Esophagus muscularis mucosa (tissue), 4 donors: ENCODE measurements at regions of chr19 and their contacts with region 1.

Region 1: GRCh38 chr19:13597640-13598039 is 91.4 kb upstream of the CACNA1A start:
- DNase-seq: no peak
- H3K4me3 ChIP-seq: no peak overlapping the region
- H3K27ac ChIP-seq: no peak overlapping the region
- H3K4me1 ChIP-seq: no peaks in the 10 kb centered on the region
- H3K27me3 ChIP-seq: peaks cover 0 to 47% (median 0%) of the 10 kb centered on the region in 4 donors
- CTCF ChIP-seq: peak; percentile 48 to 69 (median 64)
- EP300 ChIP-seq: no peak
- POLR2A ChIP-seq: no peak

Region 2: DNA sequence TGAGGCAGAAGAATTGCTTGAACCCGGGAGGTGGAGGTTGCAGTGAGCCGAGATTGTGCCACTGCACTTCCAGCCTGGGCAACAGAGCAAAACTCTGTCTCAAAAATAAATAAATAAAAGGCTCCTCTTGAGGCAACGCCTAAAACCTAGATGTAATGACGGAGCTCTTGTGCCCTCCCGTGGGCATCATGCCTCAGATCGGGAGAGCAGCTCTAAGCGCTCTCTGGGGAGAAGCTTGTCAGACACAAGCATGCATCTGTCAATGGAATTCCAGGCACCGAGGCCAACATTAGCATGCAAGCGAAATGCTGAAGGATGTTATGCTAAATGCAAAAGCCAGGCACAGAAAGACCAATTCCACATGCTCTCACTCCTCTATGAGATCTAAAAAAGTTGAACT is 121.1 kb after region 1 on chr19:
- intact Hi-C with region 1: loop called (anchors 2 kb)
- DNase-seq: no peak
- H3K4me3 ChIP-seq: no peak overlapping the region
- H3K27ac ChIP-seq: no peak overlapping the region
- H3K4me1 ChIP-seq: peaks cover 0 to 5% (median 0%) of the 10 kb centered on the region in 4 donors
- H3K27me3 ChIP-seq: no peaks in the 10 kb centered on the region
- CTCF ChIP-seq: peak; percentile 28 to 41 (median 35)
- EP300 ChIP-seq: no peak
- POLR2A ChIP-seq: no peak

Region 3: DNA sequence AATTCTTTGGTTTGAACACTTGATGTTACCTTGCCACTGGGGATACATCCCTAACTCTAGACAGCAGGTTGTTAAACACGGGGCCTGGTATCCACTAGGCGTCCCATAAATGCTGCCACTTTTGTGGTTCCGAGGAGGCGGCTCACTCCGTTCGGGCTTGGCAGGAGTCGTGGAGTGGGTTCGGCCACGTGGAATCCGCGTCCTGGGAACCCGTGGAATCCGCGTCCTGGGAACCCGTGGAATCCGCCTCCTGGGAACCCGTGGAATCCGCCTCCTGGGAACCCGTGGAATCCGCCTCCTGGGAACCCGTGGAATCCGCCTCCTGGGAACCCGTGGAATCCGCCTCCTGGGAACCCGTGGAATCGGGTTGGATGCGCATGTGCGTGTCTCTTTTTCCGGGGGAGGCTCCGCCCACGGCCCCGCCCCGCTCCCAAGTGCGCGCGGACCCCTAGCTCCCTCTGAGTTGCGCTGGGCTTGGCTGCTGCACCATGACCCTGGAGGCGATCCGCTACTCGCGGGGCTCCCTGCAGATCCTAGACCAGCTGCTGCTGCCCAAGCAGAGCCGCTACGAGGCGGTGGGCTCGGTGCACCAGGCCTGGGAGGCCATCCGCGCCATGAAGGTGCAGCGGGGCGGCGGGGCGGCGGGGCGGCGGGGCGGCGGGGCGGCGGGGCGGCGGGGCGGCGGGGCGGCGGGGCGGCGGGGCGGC is 166.6 kb after region 1 on chr19 and contains the start of gene MRI1:
- intact Hi-C with region 1: no loop called
- DNase-seq: peak; percentile 93
- H3K4me3 ChIP-seq: peak within 1 kb of the TSS; percentile 68 to 92 (median 82)
- H3K27ac ChIP-seq: peak within 1 kb of the TSS; percentile 75 to 83 (median 82)
- H3K4me1 ChIP-seq: peaks cover 4 to 33% (median 23%) of the 10 kb centered on the region in 4 donors
- H3K27me3 ChIP-seq: no peaks in the 10 kb centered on the region
- CTCF ChIP-seq: no peak
- EP300 ChIP-seq: no peak
- POLR2A ChIP-seq: no peak
- total RNA-seq, gene MRI1: 28.2 to 60.2 (median 38.5) TPM

Region 4: GRCh38 chr19:13861732-13862531 is 264.3 kb after region 1 on chr19:
- intact Hi-C with region 1: loop called (anchors 5 kb)
- DNase-seq: peak; percentile 98
- H3K4me3 ChIP-seq: peak overlapping the region; percentile 51 to 60 (median 54)
- H3K27ac ChIP-seq: peak overlapping the region; percentile 85 to 97 (median 92)
- H3K4me1 ChIP-seq: peaks cover 25 to 54% (median 48%) of the 10 kb centered on the region in 4 donors
- H3K27me3 ChIP-seq: no peaks in the 10 kb centered on the region
- CTCF ChIP-seq: peak; percentile 98 to 100 (median 99)
- EP300 ChIP-seq: no peak
- POLR2A ChIP-seq: no peak